HepG2 (cell line): ENCODE measurements at regions of chr2 and their contacts with region 1.

Region 1: GRCh38 chr2:232600053-232600773 is 33.2 kb upstream of the EFHD1 start:
- DNase-seq: no peak
- ATAC-seq: no peak
- H3K4me3 ChIP-seq: no peak overlapping the region
- H3K27ac ChIP-seq: no peak overlapping the region
- H3K4me1 ChIP-seq: no peaks in the 10 kb centered on the region
- H3K27me3 ChIP-seq: peaks cover 0 to 8% of the 10 kb centered on the region in 2 experiments; a peak in 3 of 5 replicates
- CTCF ChIP-seq: no peak
- EP300 ChIP-seq: no peak
- POLR2A ChIP-seq: no peak
- RAD21 ChIP-seq: no peak

Region 2: GRCh38 chr2:232744963-232745362 is 144.8 kb after region 1 on chr2:
- CTCF ChIA-PET with region 1: no interaction called
- POLR2A ChIA-PET with region 1: no interaction called
- in situ Hi-C with region 1: no loop called
- intact Hi-C with region 1: loop called (anchors 10 kb)
- DNase-seq: no peak
- ATAC-seq: no peak
- H3K4me3 ChIP-seq: no peak overlapping the region
- H3K27ac ChIP-seq: no peak overlapping the region
- H3K4me1 ChIP-seq: peaks cover 5% of the 10 kb centered on the region; the same call in 1 of the 2 replicates
- H3K27me3 ChIP-seq: no peaks in the 10 kb centered on the region
- CTCF ChIP-seq: no peak
- EP300 ChIP-seq: no peak
- POLR2A ChIP-seq: no peak
- RAD21 ChIP-seq: no peak